ENCODE measurements at regions of chr15 and their contacts with region 1.

Region 1: DNA sequence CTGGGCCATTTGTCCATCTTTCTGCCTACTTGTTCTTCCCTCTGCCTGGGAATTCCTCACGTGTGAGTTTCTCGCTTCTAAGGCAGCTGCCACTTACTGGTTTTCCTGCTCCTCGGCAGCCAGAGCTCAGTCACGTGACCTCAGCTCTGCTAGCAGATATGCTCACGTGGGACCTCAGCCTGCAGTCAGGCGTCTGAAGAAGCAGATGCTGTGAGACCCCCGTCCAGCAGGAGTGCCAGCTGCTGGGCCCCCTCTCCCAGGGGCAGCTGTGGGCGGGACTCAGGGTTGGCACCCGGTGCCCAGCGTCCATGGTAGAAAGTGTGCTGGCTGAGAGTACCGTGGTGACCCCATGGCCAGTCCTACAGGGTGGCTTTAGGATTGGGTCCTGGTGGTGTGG is 161.3 kb upstream of the TLE3 start:
- DNase-seq: peak; percentile 34 to 84
- ATAC-seq: peak; percentile 49 to 60 (median 52)
- H3K4me3 ChIP-seq: no peak overlapping the region
- H3K4me3 Mint-ChIP-seq: peak overlapping the region; percentile 82
- H3K27ac ChIP-seq: peak overlapping the region; percentile 16
- H3K27ac Mint-ChIP-seq: peak overlapping the region; percentile 31 to 78
- H3K4me1 ChIP-seq: peaks cover 50% of the 10 kb centered on the region
- H3K4me1 Mint-ChIP-seq: peaks cover 53 to 67% of the 10 kb centered on the region in 2 donors
- H3K27me3 ChIP-seq: no peaks in the 10 kb centered on the region
- H3K27me3 Mint-ChIP-seq: peaks cover 31 to 34% of the 10 kb centered on the region in 2 donors
- CTCF ChIP-seq: no peak

Region 2: GRCh38 chr15:70219256-70219895 is 39.6 kb before region 1 on chr15:
- intact Hi-C with region 1: no loop called
- DNase-seq: no peak
- ATAC-seq: no peak
- H3K4me3 ChIP-seq: no peak overlapping the region
- H3K4me3 Mint-ChIP-seq: no peak overlapping the region
- H3K27ac ChIP-seq: no peak overlapping the region
- H3K27ac Mint-ChIP-seq: no peak overlapping the region
- H3K4me1 ChIP-seq: no peaks in the 10 kb centered on the region
- H3K4me1 Mint-ChIP-seq: peaks cover 10 to 11% of the 10 kb centered on the region in 2 donors
- H3K27me3 ChIP-seq: no peaks in the 10 kb centered on the region
- H3K27me3 Mint-ChIP-seq: peaks cover 24 to 46% of the 10 kb centered on the region in 2 donors
- CTCF ChIP-seq: no peak

Region 3: DNA sequence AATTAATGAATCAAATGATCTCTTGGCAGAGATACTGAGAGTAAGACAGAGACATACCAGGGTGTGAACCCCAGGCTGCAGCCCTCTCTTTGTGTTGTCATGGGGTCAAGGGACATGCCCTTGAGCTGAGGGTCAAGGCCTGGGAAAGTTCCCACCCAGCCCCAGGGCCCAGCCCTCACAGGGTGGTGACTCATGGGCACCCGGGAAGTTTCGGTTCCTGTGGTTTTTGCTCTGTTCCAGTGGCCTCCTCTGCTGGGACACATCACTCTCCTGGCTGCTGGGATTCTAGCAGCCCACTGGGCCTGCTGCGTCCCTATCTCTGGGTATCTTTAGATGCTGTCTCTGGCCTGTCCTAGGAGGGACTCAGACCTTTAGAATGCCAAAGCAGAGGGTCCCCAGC is 13.1 kb before region 1 on chr15:
- intact Hi-C with region 1: no loop called
- DNase-seq: peak in 1 of 2 donors; percentile 16
- ATAC-seq: peak; percentile 26 to 57 (median 49)
- H3K4me3 ChIP-seq: no peak overlapping the region
- H3K4me3 Mint-ChIP-seq: no peak overlapping the region
- H3K27ac ChIP-seq: no peak overlapping the region
- H3K27ac Mint-ChIP-seq: no peak overlapping the region
- H3K4me1 ChIP-seq: peaks cover 44% of the 10 kb centered on the region
- H3K4me1 Mint-ChIP-seq: peaks cover 17 to 35% of the 10 kb centered on the region in 2 donors
- H3K27me3 ChIP-seq: no peaks in the 10 kb centered on the region
- H3K27me3 Mint-ChIP-seq: peaks cover 19 to 42% of the 10 kb centered on the region in 2 donors
- CTCF ChIP-seq: no peak

Region 4: GRCh38 chr15:70281811-70282307 is 22.8 kb after region 1 on chr15:
- intact Hi-C with region 1: loop called (anchors 2 kb)
- DNase-seq: no peak
- ATAC-seq: no peak
- H3K4me3 ChIP-seq: no peak overlapping the region
- H3K4me3 Mint-ChIP-seq: no peak overlapping the region
- H3K27ac ChIP-seq: no peak overlapping the region
- H3K27ac Mint-ChIP-seq: no peak overlapping the region
- H3K4me1 ChIP-seq: peaks cover 5% of the 10 kb centered on the region
- H3K4me1 Mint-ChIP-seq: peaks cover 0 to 6% of the 10 kb centered on the region in 2 donors
- H3K27me3 ChIP-seq: peaks cover 2% of the 10 kb centered on the region
- H3K27me3 Mint-ChIP-seq: peaks cover 32 to 35% of the 10 kb centered on the region in 2 donors
- CTCF ChIP-seq: no peak

Measured in natural killer cell (primary cell).